ENCODE measurements at regions of chr7 and their contacts with region 1.

Region 1: DNA sequence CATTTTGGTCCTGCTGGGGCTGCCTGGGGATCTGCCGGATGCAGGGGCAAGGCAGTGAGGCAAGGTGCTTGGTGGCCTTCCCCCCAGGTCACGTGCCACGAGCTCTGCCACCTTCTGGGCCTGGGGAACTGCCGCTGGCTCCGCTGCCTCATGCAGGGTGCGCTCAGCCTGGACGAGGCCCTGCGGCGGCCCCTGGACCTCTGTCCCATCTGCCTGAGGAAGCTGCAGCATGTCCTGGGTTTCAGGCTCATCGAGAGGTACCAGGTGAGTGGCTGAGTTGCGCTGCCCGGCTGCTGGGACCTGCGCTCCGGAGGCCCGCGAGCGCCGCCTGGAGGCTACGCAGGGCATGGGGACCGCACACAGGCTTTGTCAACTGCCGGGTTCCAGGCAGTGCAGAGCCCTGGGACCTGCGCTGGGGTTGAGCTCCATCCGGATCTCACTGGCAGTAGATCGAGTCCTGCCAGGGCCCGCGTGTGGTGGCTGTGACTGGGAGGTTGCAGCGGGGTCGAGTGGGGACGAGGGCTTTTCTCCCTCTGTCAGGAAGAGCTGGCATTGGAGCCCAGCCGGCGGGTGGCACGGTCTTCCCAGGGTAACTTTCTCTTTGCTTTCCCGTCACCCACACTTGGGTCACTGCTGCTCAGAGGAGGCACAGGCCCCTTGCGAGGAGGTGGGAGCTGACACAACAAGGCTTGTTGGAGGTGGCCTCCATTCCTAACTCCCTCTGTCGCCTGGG is 21.7 kb downstream of the AMZ1 start:
- DNase-seq: peak; percentile 94
- H3K4me3 Mint-ChIP-seq: peak overlapping the region; percentile 69
- H3K27ac Mint-ChIP-seq: peak overlapping the region; percentile 73
- H3K4me1 Mint-ChIP-seq: peaks cover 28% of the 10 kb centered on the region
- H3K27me3 Mint-ChIP-seq: peaks cover 13% of the 10 kb centered on the region

Region 2: DNA sequence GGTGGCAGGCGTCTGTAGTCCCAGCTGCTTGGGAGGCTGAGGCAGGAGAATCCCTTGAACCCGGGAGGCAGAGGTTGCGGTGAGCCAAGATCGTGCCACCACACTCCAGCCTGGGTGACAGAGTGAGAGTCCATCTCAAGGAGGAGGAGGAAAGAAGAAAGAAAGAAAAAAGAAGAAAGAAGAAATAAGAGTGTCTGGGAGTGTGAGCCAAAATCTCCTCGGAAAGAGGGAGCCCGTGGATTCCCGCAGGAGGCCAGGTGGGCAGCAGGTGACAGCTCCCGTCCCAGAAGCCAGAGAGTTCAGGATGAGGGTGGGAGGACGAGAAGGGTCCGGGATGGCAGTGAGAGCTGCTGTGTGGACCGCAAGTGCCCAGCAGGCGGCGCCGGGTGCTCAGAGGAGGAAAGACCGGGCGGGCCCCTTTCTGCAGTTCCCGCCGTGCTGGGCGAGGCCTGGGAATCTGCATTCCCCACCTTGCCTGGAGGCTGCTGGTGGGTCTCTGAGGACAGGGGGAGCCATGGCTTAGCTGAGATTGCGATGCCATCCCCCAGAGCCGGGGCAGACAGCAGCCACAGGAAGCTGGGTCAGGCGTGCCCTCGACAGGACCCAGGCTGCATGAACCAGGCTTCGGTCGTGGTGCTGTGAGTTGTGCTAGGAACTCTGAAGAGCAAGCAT is 38.9 kb before region 1 on chr7:
- intact Hi-C with region 1: loop called (anchors 1 kb)
- DNase-seq: peak; percentile 90
- H3K4me3 Mint-ChIP-seq: peak overlapping the region; percentile 8
- H3K27ac Mint-ChIP-seq: no peak overlapping the region
- H3K4me1 Mint-ChIP-seq: peaks cover 4% of the 10 kb centered on the region
- H3K27me3 Mint-ChIP-seq: peaks cover 32% of the 10 kb centered on the region

Region 3: DNA sequence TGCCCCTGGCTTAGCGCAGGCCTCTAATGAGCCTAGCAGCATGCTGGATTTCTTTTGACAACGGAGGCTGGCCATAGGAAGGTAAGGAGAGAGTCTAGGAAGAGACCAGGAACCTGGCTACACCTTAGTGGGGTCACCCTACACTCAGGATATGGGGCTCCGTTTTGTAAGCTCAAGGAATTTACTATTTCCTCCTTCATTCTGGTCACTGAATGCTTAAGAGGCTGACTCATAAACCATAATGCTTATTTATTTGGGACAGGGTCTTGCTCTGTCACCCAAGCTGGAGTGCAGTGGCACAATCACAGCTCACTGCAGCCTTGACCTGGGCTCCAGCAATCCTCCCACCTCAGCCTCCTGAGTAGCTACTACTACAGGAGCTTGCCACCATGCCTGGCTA is 295.5 kb after region 1 on chr7:
- intact Hi-C with region 1: no loop called
- DNase-seq: no peak
- H3K4me3 Mint-ChIP-seq: no peak overlapping the region
- H3K27ac Mint-ChIP-seq: no peak overlapping the region
- H3K4me1 Mint-ChIP-seq: peaks cover 25% of the 10 kb centered on the region
- H3K27me3 Mint-ChIP-seq: no peaks in the 10 kb centered on the region